ENCODE measurements at regions of chr1 and their contacts with region 1.

Region 1: DNA sequence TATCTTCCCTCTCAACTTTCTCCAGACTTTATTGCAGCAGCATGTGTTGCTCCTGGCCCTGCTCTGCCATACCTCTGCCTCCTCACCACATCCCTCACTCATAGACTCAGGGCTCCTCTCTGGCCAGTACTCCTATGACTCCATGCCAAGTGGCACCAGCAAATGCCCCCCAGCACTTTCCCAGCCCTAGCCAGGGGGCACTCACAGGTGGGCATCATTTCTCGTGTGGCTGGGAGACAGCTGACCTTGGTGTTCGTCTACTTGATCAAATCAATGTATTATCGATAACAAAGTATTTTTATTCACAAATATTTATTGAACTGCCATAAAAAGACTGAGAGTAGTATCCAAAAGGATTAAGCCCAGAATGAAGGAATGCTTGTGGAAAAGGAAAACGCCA is 418.2 kb downstream of the FAM72C start:
- DNase-seq: no peak
- ATAC-seq: no peak
- H3K4me3 ChIP-seq: no peak overlapping the region
- H3K27ac ChIP-seq: no peak overlapping the region
- H3K4me1 ChIP-seq: no peaks in the 10 kb centered on the region
- H3K27me3 ChIP-seq: no peaks in the 10 kb centered on the region
- CTCF ChIP-seq: no peak
- EP300 ChIP-seq: no peak
- POLR2A ChIP-seq: no peak
- RAD21 ChIP-seq: no peak

Region 2: DNA sequence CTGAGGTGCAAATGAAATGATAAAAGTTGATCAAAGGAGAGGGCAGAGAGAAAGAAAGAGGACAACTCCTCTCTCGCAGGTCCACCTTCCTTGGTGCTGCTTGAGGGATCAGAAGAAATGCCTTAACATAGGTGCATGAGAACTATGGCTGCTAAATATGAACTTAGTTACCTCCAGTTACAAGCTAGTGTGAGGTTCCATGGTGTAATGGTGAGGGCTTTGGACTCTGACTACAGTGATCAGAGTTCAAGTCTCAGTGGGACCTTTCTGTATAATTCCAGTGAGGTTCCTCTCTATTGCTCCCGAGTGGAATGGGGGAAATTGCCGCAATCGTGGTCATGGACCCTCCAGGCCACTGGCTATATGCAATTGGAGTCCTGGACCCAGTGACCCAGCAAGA is 30.9 kb after region 1 on chr1:
- CTCF ChIA-PET with region 1: no interaction called
- POLR2A ChIA-PET with region 1: no interaction called
- in situ Hi-C with region 1: loop called (anchors 5 kb)
- intact Hi-C with region 1: no loop called
- DNase-seq: no peak
- ATAC-seq: no peak
- H3K4me3 ChIP-seq: no peak overlapping the region
- H3K27ac ChIP-seq: no peak overlapping the region
- H3K4me1 ChIP-seq: no peaks in the 10 kb centered on the region
- H3K27me3 ChIP-seq: no peaks in the 10 kb centered on the region
- CTCF ChIP-seq: no peak
- EP300 ChIP-seq: no peak
- POLR2A ChIP-seq: no peak
- RAD21 ChIP-seq: no peak

Measured in K562 (cell line).